ENCODE measurements at regions of chr12 and their contacts with region 1.

Region 1: DNA sequence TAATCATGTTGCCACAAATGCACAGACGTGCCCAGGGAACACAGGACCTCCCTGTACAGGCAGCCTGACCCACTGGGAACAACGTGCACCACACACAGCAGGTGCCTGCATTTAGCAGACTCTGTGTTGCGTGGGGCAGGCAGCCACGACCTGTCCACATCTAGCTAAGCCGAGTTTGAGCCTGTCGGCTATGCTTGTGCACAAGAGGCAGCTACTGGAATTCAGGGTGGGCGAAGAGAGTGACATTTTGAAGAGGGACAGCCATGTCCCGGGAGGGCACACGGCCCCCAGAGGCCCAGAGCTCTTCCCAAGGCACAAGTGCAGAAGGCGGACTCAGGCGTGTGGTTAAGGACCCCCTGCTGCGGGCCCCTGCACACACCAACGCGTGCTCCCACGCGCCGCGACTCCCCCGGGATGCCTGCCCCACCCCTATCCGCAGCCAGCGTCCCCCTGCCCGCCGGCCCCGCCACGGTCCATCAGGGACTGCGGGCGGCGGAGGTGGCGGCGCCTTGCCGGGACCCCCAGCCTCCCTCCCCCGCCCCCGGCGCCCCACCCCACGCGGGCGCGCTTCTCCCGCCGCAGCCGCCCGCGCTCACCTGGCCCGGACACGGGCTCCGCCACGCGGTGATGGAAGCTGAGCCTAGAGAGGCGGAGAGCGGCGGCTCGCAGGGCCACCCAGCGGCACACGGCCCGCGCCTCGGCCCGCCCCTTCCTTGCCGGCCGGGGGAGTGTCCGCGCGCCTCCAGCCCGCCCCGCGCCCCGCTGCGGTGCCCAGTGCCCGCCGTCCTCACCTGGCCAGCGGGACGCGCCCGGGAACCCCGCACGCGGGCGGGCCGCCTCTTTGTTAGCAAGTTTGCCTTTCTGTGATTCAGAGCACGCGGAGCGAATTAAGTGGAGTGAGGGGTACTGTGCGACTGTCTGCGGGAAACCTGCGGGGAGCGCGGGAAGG is 125.3 kb upstream of the PRMT8 start:
- DNase-seq: peak; percentile 64
- ATAC-seq: peak; percentile 92
- H3K4me3 ChIP-seq: peak overlapping the region; percentile 66
- H3K27ac ChIP-seq: no peak overlapping the region
- H3K4me1 ChIP-seq: no peaks in the 10 kb centered on the region
- H3K27me3 ChIP-seq: peaks cover 2% of the 10 kb centered on the region; the same call in 1 of the 2 replicates
- CTCF ChIP-seq: no peak

Region 2: DNA sequence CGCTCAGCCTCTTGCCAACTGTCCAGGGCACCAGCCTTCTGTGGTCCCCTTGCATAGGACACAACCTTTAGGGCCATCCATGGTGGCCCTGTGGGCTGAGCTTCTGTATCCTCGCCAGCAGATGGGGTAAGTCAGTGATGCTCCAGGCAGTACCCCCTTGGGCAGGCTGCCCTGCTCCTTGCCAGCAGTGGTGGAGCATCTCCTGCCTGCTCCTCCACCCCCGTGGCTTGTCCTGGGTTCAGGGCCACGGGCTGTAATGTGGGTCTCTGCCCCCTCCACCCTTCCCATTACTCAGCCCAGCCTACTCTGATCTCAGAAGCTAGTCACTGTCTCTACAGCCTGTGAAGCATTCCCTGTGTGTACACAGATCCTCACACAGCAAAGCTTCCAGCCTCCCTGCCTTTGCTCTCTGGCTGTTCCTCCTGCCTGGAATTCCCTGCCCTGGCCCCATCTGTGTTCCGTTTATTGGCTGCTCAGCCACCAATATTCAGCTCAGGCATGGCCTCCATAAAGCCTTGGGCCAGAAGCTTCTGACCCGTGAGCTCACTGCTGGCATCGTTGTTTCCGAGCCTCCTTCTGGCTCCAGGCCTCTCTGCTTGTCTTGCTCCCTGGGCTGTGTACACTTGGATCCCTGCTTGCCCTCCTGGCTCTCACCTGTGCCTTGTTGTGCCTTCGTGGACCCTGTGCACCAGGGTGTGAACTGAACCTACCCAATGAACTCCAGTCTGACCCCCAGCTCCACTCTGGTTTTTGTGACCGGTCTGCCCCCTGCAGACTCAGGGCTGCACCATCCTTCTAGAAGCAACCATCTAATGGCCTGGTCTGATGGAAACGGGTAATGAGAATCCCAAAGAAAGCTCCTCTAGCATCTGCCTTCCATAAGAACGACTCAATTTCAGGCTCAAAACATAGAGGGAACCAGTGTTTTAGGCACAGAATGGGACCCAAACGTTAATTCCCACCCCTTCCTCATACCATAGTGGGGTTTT is 51.8 kb before region 1 on chr12:
- CTCF ChIA-PET with region 1: no interaction called
- POLR2A ChIA-PET with region 1: no interaction called
- intact Hi-C with region 1: loop called (anchors 5 kb)
- DNase-seq: peak; percentile 52
- ATAC-seq: no peak
- H3K4me3 ChIP-seq: no peak overlapping the region
- H3K27ac ChIP-seq: peak overlapping the region; percentile 44
- H3K4me1 ChIP-seq: peaks cover 75% of the 10 kb centered on the region
- H3K27me3 ChIP-seq: no peaks in the 10 kb centered on the region
- CTCF ChIP-seq: peak; percentile 52

Region 3: DNA sequence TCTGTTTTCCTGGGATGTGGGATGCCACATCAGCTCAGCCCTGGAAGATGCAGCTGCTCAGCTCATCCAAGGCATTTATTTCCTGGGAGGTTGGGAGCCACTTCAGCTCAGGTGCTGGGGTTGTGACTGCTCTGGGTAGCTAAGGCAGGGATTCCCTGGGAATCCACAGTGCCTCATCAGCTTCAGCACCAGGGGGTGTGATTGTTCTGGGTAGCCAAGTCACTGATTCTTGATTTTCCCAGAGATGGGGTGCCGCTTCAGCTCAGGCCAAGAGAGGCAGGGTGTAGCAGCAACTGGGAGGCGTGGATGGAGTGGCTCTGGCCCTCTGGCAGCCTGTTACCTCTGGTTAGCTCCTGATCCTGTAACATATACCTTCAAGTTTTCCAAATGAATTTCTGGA is 43.9 kb after region 1 on chr12:
- CTCF ChIA-PET with region 1: no interaction called
- POLR2A ChIA-PET with region 1: no interaction called
- intact Hi-C with region 1: no loop called
- DNase-seq: no peak
- ATAC-seq: no peak
- H3K4me3 ChIP-seq: no peak overlapping the region
- H3K27ac ChIP-seq: no peak overlapping the region
- H3K4me1 ChIP-seq: no peaks in the 10 kb centered on the region
- H3K27me3 ChIP-seq: no peaks in the 10 kb centered on the region
- CTCF ChIP-seq: no peak